ENCODE measurements at regions of chr2 and their contacts with region 1.

Region 1: DNA sequence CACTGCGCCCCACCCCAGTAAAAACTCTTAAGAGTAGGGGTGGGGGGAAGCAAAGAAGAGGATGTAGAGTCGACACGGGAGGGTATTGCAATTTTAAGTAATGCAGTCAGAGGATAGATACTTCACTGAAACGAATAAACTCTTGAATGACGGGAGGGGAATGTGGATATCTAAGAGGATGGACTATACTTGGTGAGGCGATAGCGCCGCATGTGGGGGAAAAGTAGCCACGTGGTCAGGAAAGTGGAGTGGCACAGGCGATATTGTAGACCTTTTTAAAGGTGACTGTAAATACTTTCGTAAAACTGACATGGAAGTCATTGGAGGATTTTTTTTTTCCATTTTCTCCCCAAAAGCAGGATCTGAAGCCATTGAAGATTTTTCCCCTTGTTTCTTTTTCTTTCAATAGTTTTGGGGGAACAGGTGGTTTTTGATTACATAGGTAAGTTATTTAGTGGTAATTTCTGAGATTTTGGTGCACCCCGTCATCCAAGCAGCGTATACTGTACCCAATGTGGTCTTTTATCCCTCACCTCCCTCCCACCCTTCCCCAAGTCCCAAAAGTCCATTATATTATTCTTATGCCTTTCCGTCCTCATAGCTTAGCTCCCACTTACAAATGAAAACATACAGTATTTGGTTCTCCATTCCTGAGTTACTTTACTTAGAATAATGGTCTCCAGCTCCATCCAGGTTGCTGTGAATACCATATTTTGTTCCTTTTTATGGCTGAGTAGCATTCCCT is 13.8 kb downstream of the CLK1 start:
- DNase-seq: no peak
- ATAC-seq: peak; percentile 21 to 41

Region 2: DNA sequence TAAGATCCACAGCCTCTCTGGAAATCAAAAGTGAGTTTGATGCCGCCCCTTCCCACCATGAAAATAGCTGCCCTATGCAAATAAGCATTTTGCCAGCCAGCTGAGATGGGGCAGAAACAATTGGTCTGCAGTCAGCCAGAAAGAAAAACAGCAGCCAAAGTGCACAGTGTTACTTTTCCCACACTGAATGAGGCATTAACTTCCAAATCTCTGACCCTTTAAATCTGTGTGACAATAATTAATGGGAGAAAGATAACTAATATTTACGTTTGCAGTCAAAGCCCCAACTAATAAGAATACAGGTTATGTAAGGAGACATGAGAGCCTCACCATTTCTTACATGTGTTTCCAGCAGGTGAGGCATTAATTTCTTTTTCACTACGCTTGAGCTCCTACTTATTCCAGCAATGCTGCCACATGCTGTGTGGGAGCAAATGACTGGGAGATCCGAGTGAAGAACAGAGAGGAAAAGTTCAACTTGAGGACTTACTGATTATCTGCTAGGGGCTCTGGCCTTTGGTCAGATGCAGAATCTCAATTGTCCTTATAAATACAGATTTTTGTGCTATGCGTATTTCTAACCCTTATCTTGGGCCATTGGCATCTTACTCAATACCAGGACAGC is 1732.0 kb before region 1 on chr2:
- intact Hi-C with region 1: no loop called
- DNase-seq: no peak
- ATAC-seq: no peak

Region 3: DNA sequence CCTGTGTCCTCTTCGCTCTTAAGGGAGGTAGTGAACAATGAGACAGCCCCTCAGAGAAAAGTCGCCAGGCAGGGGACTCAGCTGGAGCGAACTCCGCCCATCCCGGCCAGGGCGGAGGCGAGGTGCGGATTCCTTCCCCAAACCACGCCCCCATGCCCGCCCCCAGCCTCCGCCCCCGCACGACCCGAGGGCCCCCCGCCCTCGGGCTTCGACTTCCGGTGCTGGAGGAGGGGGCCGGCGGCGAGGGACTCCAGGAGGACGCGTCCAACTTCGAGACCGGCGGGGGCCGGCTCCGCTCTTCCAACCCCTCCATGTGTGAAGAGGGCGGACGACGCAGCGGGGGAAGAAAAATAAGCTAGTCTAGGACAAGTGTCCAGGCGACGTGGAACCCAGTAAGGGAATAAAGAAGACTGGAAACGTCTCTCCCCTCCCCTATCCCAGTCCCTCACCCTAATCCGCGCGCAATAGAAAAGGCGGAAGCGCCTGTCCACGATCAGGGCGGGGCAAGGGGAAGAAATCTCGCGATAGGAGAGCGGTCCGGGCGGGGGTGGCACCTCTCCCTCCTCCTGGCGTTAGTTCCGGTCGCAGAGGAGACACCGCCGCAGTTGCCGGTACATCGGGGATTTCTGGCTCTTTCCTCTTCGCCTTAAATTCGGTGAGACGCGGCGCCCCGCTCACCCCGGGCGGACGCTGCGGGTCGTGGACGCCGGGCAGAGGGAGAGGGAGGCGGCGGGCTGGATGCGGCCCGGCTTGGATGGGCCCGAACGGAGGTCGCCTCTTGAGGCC is 39.2 kb before region 1 on chr2 and contains the start of gene BZW1:
- intact Hi-C with region 1: loop called in 1 of 2 experiments (anchors 5 kb)
- DNase-seq: peak; percentile 96
- ATAC-seq: peak; percentile 94 to 95
- total RNA-seq, gene BZW1: 104 to 176 TPM

Measured in left cardiac atrium (tissue), 4 donors.